Activated CD4-positive, alpha-beta memory T cell treated with anti-CD3 and anti-CD28 coated beads, Interleukin-2, amount 10 ng/mL, durations not matched to agents 7 days and 5 days (primary cell): ENCODE measurements at regions of chr16 and their contacts with region 1.

Region 1: GRCh38 chr16:75764154-75764768 is 38.0 kb upstream of the CPHXL start:
- DNase-seq: peak; percentile 66
- H3K4me3 Mint-ChIP-seq: no peak overlapping the region
- H3K27ac Mint-ChIP-seq: no peak overlapping the region
- H3K4me1 Mint-ChIP-seq: peaks cover 9% of the 10 kb centered on the region
- H3K27me3 Mint-ChIP-seq: peaks cover 2% of the 10 kb centered on the region

Region 2: GRCh38 chr16:75471723-75472633 is 292.3 kb before region 1 on chr16:
- CTCF ChIA-PET with region 1: interaction called, 13 read pairs
- POLR2A ChIA-PET with region 1: no interaction called
- DNase-seq: peak; percentile 45
- H3K4me3 Mint-ChIP-seq: no peak overlapping the region
- H3K27ac Mint-ChIP-seq: no peak overlapping the region
- H3K4me1 Mint-ChIP-seq: no peaks in the 10 kb centered on the region
- H3K27me3 Mint-ChIP-seq: no peaks in the 10 kb centered on the region

Region 3: DNA sequence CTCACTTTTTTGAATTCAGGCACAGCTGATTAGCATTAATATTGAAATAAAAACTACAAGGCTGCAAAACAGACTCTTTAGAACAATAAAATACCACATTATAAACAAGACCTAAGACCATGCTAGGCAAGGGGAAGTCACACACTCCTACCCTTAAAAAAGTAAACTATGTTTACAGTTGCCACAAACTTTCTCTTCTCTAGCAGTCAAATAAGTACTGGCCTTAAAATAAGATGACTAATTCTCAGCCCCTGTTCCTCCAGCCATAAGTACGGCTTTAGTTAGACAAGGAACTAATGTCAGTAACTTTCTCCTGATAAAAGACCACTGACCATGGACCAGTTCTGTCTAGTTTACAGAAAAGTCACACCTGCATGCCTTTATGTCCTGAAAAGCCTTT is 18.4 kb before region 1 on chr16:
- CTCF ChIA-PET with region 1: no interaction called
- POLR2A ChIA-PET with region 1: no interaction called
- DNase-seq: no peak
- H3K4me3 Mint-ChIP-seq: no peak overlapping the region
- H3K27ac Mint-ChIP-seq: no peak overlapping the region
- H3K4me1 Mint-ChIP-seq: no peaks in the 10 kb centered on the region
- H3K27me3 Mint-ChIP-seq: peaks cover 13% of the 10 kb centered on the region